ENCODE measurements at regions of chr11 and their contacts with region 1.

Region 1: GRCh38 chr11:70467201-70468085 is 69.1 kb downstream of the CTTN start:
- H3K4me3 ChIP-seq: no peak overlapping the region
- H3K27ac ChIP-seq: no peak overlapping the region
- H3K4me1 ChIP-seq: no peaks in the 10 kb centered on the region
- CTCF ChIP-seq: peak; percentile 21; the same call in 1 of the 2 replicates

Region 2: GRCh38 chr11:70755410-70756161 is 288.1 kb after region 1 on chr11:
- CTCF ChIA-PET with region 1: interaction called, 18 read pairs
- POLR2A ChIA-PET with region 1: no interaction called
- H3K4me3 ChIP-seq: no peak overlapping the region
- H3K27ac ChIP-seq: no peak overlapping the region
- H3K4me1 ChIP-seq: no peaks in the 10 kb centered on the region
- CTCF ChIP-seq: peak; percentile 90

Measured in HEK293 (cell line).